GM23248 (cell line): ENCODE measurements at regions of chr14 and their contacts with region 1.

Region 1: GRCh38 chr14:37709419-37710195 is 114.2 kb downstream of the TTC6 start:
- DNase-seq: peak; percentile 51
- H3K4me3 ChIP-seq: no peak overlapping the region
- H3K27ac ChIP-seq: no peak overlapping the region
- H3K4me1 ChIP-seq: peaks cover 10% of the 10 kb centered on the region
- H3K27me3 ChIP-seq: no peaks in the 10 kb centered on the region

Region 2: DNA sequence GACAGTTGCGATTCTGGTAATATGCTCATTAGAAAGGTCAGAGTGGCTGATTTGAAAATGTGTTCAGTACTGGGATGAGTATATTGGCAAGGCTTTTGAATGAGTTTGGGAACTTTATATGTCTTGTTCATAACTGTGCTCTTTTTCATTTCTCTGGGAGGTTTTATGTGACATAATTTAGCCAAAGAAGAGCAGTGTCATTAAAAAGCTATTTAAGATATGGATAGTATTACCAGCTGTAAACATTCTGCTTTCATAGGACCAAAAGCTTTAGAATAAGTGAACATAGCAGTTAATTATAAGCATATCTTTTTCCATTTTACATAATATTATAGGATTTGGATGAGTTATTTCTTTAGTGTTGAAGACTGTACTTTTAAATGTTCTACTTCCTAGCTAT is 146.3 kb after region 1 on chr14:
- in situ Hi-C with region 1: loop called (anchors 10 kb)
- DNase-seq: no peak
- H3K4me3 ChIP-seq: no peak overlapping the region
- H3K27ac ChIP-seq: no peak overlapping the region
- H3K4me1 ChIP-seq: no peaks in the 10 kb centered on the region
- H3K27me3 ChIP-seq: peaks cover 5% of the 10 kb centered on the region

Region 3: GRCh38 chr14:38039496-38039895 is 329.9 kb after region 1 on chr14:
- in situ Hi-C with region 1: no loop called
- DNase-seq: peak; percentile 79
- H3K4me3 ChIP-seq: no peak overlapping the region
- H3K27ac ChIP-seq: no peak overlapping the region
- H3K4me1 ChIP-seq: peaks cover 33% of the 10 kb centered on the region
- H3K27me3 ChIP-seq: no peaks in the 10 kb centered on the region

Region 4: DNA sequence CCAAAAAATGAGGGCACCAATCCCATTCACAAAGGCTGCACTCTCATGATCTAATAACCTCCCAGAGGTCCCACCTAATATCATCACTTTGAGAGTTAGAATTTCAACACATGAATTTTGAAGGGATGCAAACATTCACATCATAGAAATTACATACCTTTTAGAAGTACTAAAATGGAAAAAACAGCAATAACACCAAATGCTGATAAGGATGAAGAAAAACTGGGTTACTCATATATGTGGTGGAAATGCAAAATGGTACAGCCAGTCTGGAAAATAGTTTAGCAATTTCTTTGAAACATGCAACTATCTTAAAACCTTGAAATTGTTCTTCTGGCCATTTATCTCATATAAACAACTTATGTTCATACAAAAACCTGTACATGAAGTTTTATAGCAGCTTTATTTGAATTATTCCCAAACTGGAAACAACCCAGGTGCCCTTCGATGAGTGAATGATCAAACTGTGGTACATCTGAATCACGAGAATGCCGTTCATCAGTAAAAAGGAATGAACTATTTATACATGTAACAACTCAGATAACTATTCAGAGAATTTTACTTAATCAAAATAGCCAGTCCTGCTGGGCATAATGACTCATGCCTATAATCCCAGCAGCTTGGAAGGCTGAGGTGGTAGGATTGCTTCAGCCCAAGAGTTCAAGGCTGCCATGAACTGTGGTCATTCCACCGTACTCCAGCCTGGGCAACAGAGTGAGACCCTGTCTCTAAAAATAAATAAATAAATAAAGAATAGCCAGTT is 388.6 kb after region 1 on chr14:
- in situ Hi-C with region 1: no loop called
- DNase-seq: peak; percentile 88
- H3K4me3 ChIP-seq: no peak overlapping the region
- H3K27ac ChIP-seq: peak overlapping the region; percentile 55
- H3K4me1 ChIP-seq: peaks cover 12% of the 10 kb centered on the region
- H3K27me3 ChIP-seq: no peaks in the 10 kb centered on the region